ENCODE measurements at regions of chr12 and their contacts with region 1.

Region 1: GRCh38 chr12:47079468-47079980 is at the starts of genes AMIGO2 and PCED1B:
- DNase-seq: peak; percentile 88
- H3K4me3 Mint-ChIP-seq: peak within 1 kb of the TSS; percentile 95
- H3K27ac Mint-ChIP-seq: peak within 1 kb of the TSS; percentile 94
- H3K4me1 Mint-ChIP-seq: peaks cover 69% of the 10 kb centered on the region
- H3K27me3 Mint-ChIP-seq: no peaks in the 10 kb centered on the region
- total RNA-seq, gene AMIGO2: 19.2 to 19.6 TPM
- total RNA-seq, gene PCED1B: 138 to 143 TPM

Region 2: GRCh38 chr12:46217541-46218321 is 861.8 kb before region 1 on chr12:
- CTCF ChIA-PET with region 1: no interaction called
- intact Hi-C with region 1: loop called (anchors 5 kb)
- DNase-seq: peak; percentile 74
- H3K4me3 Mint-ChIP-seq: peak overlapping the region; percentile 33
- H3K27ac Mint-ChIP-seq: peak overlapping the region; percentile 100
- H3K4me1 Mint-ChIP-seq: peaks cover 95% of the 10 kb centered on the region
- H3K27me3 Mint-ChIP-seq: no peaks in the 10 kb centered on the region

Region 3: GRCh38 chr12:47207340-47207717 is 127.8 kb after region 1 on chr12:
- CTCF ChIA-PET with region 1: interaction called, 15 read pairs
- intact Hi-C with region 1: loop called (anchors 1 kb)
- DNase-seq: peak; percentile 81
- H3K4me3 Mint-ChIP-seq: peak overlapping the region; percentile 94
- H3K27ac Mint-ChIP-seq: peak overlapping the region; percentile 100
- H3K4me1 Mint-ChIP-seq: peaks cover 71% of the 10 kb centered on the region
- H3K27me3 Mint-ChIP-seq: no peaks in the 10 kb centered on the region

Region 4: GRCh38 chr12:47307680-47308399 is 228.3 kb after region 1 on chr12:
- CTCF ChIA-PET with region 1: no interaction called
- intact Hi-C with region 1: loop called (anchors 1 kb)
- DNase-seq: peak; percentile 74
- H3K4me3 Mint-ChIP-seq: peak overlapping the region; percentile 91
- H3K27ac Mint-ChIP-seq: peak overlapping the region; percentile 98
- H3K4me1 Mint-ChIP-seq: peaks cover 73% of the 10 kb centered on the region
- H3K27me3 Mint-ChIP-seq: no peaks in the 10 kb centered on the region

Region 5: GRCh38 chr12:47361389-47362021 is 282.0 kb after region 1 on chr12:
- CTCF ChIA-PET with region 1: no interaction called
- intact Hi-C with region 1: loop called (anchors 1 kb)
- DNase-seq: peak; percentile 81
- H3K4me3 Mint-ChIP-seq: peak overlapping the region; percentile 72
- H3K27ac Mint-ChIP-seq: peak overlapping the region; percentile 98
- H3K4me1 Mint-ChIP-seq: peaks cover 58% of the 10 kb centered on the region
- H3K27me3 Mint-ChIP-seq: no peaks in the 10 kb centered on the region

Region 6: GRCh38 chr12:47686645-47687240 is 607.2 kb after region 1 on chr12:
- CTCF ChIA-PET with region 1: no interaction called
- intact Hi-C with region 1: loop called (anchors 5 kb)
- DNase-seq: peak; percentile 57
- H3K4me3 Mint-ChIP-seq: no peak overlapping the region
- H3K27ac Mint-ChIP-seq: no peak overlapping the region
- H3K4me1 Mint-ChIP-seq: peaks cover 12% of the 10 kb centered on the region
- H3K27me3 Mint-ChIP-seq: no peaks in the 10 kb centered on the region